Endothelial cell of umbilical vein (primary cell): ENCODE measurements at regions of chr19 and their contacts with region 1.

Region 1: GRCh38 chr19:39144245-39145071 is 18.9 kb downstream of the PAK4 start:
- DNase-seq: peak; percentile 90
- H3K4me3 ChIP-seq: no peak overlapping the region
- H3K27ac ChIP-seq: peak overlapping the region; percentile 21
- H3K4me1 ChIP-seq: peaks cover 19% of the 10 kb centered on the region
- H3K27me3 ChIP-seq: no peaks in the 10 kb centered on the region
- CTCF ChIP-seq: no peak
- POLR2A ChIP-seq: no peak

Region 2: DNA sequence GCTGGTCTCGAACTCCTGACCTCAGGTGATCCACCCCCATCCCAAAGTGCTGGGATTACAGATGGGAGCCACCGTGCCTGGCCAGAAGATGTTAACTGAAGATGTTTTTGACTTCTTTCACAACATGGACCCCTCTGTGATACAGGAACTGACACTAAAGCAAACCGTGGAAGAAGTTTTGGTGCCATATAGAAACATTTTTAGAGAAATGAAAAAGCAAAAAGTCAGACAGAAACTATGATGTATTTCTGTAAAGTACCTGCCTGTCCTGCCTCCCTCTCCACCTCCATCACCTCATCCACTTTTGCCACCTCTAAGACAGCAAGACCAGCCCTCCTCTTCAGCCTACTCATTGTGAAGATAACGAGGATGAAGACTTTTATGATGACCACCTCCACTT is 123.4 kb before region 1 on chr19:
- CTCF ChIA-PET with region 1: no interaction called
- POLR2A ChIA-PET with region 1: no interaction called
- dilution Hi-C with region 1: no loop called
- intact Hi-C with region 1: no loop called
- DNase-seq: no peak
- H3K4me3 ChIP-seq: no peak overlapping the region
- H3K27ac ChIP-seq: no peak overlapping the region
- H3K4me1 ChIP-seq: no peaks in the 10 kb centered on the region
- H3K27me3 ChIP-seq: peaks cover 0 to 2% of the 10 kb centered on the region in 2 experiments
- CTCF ChIP-seq: no peak
- POLR2A ChIP-seq: no peak

Region 3: GRCh38 chr19:39131235-39131755 is 13.2 kb before region 1 on chr19:
- CTCF ChIA-PET with region 1: interaction called, 6 read pairs
- POLR2A ChIA-PET with region 1: no interaction called
- dilution Hi-C with region 1: no loop called
- intact Hi-C with region 1: loop called (anchors 2 kb)
- DNase-seq: peak; percentile 66
- H3K4me3 ChIP-seq: no peak overlapping the region
- H3K27ac ChIP-seq: peak overlapping the region; percentile 83
- H3K4me1 ChIP-seq: peaks cover 37% of the 10 kb centered on the region
- H3K27me3 ChIP-seq: no peaks in the 10 kb centered on the region
- CTCF ChIP-seq: no peak
- POLR2A ChIP-seq: no peak

Region 4: DNA sequence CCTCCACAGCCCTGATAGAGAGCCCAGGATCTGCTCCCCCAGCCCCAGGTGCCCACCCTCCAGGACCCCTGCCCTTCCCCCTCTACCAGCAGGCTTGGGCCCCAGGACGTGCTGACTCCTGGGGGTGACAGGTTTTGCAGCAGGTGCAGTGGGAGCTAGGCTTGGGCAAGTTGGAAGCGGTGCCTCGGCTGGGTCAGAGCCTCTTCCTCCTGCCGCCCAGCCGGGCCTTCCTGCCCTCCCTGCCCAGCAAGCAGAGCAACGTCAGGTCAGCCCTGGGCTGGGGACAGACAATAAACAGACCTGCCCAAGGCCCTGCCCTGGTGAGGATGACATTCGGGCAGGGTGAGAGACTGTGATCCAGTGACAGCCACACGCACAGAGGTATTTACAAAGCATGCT is 43.1 kb after region 1 on chr19:
- CTCF ChIA-PET with region 1: interaction called, 3 read pairs
- POLR2A ChIA-PET with region 1: no interaction called
- dilution Hi-C with region 1: no loop called
- intact Hi-C with region 1: loop called (anchors 1 kb)
- DNase-seq: no peak
- H3K4me3 ChIP-seq: no peak overlapping the region
- H3K27ac ChIP-seq: no peak overlapping the region
- H3K4me1 ChIP-seq: peaks cover 5% of the 10 kb centered on the region
- H3K27me3 ChIP-seq: peaks cover 4 to 7% of the 10 kb centered on the region in 2 experiments
- CTCF ChIP-seq: no peak
- POLR2A ChIP-seq: no peak